Calu3 (cell line): ENCODE measurements at regions of chr20 and their contacts with region 1.

Region 1: GRCh38 chr20:46681032-46681854 is 8.0 kb downstream of the TP53RK start:
- DNase-seq: peak; percentile 89
- H3K4me3 Mint-ChIP-seq: no peak overlapping the region
- H3K27ac Mint-ChIP-seq: no peak overlapping the region
- H3K4me1 Mint-ChIP-seq: peaks cover 18% of the 10 kb centered on the region
- H3K27me3 Mint-ChIP-seq: no peaks in the 10 kb centered on the region
- CTCF ChIP-seq: peak; percentile 88

Region 2: DNA sequence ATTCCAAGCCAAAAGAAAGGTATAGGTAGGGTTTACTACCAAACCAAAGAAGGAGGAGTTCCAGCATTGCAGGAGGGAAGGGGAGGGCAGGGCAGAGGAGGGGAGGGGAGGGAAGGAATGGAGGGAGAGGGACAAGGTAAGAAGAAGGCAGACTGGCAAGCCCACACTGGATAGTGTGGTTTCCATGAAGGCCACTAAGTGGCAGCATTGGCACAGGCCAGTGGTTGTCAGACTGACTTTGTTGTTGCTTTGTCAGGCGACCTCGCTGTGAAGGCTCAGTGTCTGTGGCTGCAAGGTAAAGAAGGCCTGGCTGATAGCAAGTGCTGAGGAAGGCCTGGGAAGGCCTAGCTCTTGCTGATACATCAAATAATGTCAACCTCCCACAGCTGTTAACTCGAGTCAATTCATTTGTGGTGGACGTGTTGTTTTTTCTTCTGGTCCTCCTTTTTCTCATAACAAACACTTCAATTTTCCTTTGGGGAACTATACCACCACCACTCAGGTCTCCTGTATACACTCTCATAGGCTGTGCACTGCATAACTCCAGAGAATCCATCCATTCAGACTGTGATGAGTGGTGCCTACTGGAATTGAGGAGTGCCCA is 160.2 kb before region 1 on chr20:
- CTCF ChIA-PET with region 1: interaction called, 9 read pairs
- intact Hi-C with region 1: loop called (anchors 1 kb)
- DNase-seq: peak; percentile 79
- H3K4me3 Mint-ChIP-seq: no peak overlapping the region
- H3K27ac Mint-ChIP-seq: no peak overlapping the region
- H3K4me1 Mint-ChIP-seq: no peaks in the 10 kb centered on the region
- H3K27me3 Mint-ChIP-seq: peaks cover 59% of the 10 kb centered on the region
- CTCF ChIP-seq: peak; percentile 86

Region 3: DNA sequence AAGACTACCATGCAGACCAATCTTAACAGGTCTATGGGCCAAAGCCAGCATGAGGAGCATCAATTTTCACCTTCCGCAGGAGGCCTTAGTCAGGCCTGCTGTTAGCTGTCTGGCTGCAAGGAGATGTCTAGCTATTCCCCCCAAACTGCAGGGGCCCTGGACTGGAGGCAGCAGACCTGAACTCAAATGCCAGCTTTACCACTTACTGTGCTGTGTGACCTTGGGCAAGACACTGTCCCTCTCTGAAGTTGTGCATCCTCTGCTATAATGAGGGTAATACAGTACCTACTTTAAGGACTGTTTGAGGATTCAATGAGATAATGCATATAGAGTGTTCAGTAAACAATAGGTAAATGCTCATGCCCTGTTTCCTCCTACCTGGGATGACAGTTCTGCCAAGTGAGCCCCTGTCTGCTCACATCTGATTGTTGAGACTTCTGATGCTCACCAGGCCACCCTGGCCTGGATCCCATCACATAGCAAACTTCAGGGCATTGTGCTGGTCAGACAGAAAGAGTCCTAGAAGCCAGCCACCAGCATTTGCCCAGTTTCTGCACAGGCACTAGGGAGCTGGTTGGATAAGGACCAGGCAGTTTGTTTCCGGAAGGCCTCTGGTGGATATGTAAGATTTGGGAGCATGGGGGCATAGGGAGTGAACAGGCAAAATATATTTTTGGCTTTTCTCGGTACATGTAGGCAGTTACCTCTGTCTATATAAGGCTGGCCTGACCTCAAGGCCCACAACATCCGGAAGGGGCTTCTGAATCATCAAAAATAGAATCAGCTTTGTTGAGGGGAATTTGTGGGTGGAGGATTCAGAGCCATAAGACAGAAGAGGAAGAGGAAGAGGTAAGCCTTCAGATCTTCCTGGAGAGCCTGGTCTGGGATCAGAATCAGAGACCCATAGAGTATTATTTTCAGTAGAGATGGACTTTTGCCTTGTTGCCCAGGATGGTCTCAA is 128.5 kb before region 1 on chr20:
- CTCF ChIA-PET with region 1: no interaction called
- intact Hi-C with region 1: no loop called
- DNase-seq: no peak
- H3K4me3 Mint-ChIP-seq: no peak overlapping the region
- H3K27ac Mint-ChIP-seq: no peak overlapping the region
- H3K4me1 Mint-ChIP-seq: no peaks in the 10 kb centered on the region
- H3K27me3 Mint-ChIP-seq: peaks cover 29% of the 10 kb centered on the region
- CTCF ChIP-seq: no peak